MCF 10A (cell line): ENCODE measurements at regions of chr17 and their contacts with region 1.

Region 1: DNA sequence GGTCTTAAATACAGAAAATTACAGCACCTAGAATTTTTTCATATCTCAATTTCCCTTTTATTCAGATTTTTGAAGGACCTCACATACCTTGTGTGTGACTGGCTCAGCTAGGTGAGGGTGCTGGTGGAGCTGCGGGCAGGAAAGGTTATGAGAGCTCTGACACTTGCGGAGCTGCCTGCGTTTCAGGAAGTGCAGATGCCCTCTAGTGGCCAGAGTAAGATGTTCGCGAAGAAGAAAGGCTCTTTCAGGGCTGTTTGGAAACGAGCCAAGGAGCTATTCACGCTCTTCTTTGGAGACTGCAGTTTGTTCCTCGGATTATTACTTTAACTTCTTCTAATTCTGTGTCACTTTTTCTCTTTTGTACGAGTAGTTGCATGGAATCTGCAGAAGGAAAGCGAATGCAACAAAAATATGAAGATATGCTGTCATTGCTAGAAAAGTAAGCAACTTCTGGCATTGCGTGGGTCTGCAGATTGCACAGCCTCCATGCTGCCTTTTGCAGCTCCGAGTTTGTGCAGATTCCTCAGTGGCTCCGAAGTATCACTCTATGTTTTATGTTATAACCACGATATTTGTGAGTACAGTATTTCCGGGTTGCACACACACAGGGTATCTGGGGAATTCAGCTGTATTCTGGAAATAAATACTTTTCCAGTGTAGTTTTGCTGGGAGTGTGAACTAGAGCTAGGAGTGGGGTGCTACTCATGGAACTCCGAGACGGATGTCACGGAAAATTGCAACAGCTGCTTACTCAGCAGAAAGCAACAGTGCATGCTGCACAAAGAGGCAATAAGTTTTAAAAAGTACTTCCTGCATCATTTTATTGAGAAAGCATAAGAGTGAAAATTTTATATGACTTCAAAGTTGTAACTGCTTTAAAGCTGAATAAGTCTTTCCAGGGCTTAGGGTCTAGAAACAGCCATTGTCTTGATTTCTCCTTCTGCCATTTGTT is 46.3 kb downstream of the DNAH9 start:
- DNase-seq: peak; percentile 63
- H3K4me3 Mint-ChIP-seq: no peak overlapping the region
- H3K27ac Mint-ChIP-seq: no peak overlapping the region
- H3K4me1 Mint-ChIP-seq: peaks cover 17% of the 10 kb centered on the region
- H3K27me3 Mint-ChIP-seq: no peaks in the 10 kb centered on the region
- CTCF ChIP-seq: peak; percentile 74

Region 2: GRCh38 chr17:11144358-11145233 is 499.9 kb before region 1 on chr17:
- CTCF ChIA-PET with region 1: interaction called, 4 read pairs
- POLR2A ChIA-PET with region 1: no interaction called
- intact Hi-C with region 1: loop called (anchors 1 kb)
- DNase-seq: peak; percentile 46
- H3K4me3 Mint-ChIP-seq: no peak overlapping the region
- H3K27ac Mint-ChIP-seq: no peak overlapping the region
- H3K4me1 Mint-ChIP-seq: peaks cover 14% of the 10 kb centered on the region
- H3K27me3 Mint-ChIP-seq: no peaks in the 10 kb centered on the region
- CTCF ChIP-seq: peak; percentile 74

Region 3: DNA sequence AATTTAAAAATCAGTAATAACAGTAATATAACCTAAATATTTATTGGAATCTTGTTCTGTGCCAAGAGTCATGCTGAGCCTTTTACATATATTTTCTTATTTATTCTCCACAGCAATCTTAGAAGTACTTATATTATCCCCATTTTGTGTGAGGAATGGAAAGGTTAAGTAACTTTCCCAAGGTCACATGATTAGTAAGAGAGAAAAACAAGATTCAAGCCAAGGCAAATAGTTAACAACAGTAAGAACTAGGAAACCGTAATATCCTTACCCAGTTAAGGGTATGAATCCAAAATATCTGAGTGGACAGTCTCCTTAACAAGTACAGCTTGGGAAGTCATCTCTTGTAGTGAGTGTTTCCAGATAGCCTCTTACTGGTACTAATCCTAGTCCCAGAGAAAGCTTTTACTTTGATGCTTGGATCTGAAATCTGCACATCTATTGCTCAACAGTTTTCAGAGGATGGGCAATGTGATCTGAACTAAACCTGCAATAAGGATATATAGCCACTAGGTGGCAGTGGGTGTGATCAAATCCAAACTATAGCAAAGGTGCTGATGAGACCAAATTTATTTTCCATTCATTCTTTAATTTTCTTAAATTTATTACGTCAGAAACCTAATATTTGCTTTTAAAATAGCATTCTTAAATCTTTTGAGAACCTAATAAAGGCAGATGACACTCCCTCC is 380.2 kb before region 1 on chr17:
- CTCF ChIA-PET with region 1: no interaction called
- POLR2A ChIA-PET with region 1: no interaction called
- intact Hi-C with region 1: loop called (anchors 10 kb)
- DNase-seq: peak; percentile 0
- H3K4me3 Mint-ChIP-seq: no peak overlapping the region
- H3K27ac Mint-ChIP-seq: no peak overlapping the region
- H3K4me1 Mint-ChIP-seq: no peaks in the 10 kb centered on the region
- H3K27me3 Mint-ChIP-seq: peaks cover under 1% of the 10 kb centered on the region
- CTCF ChIP-seq: peak; percentile 36

Region 4: DNA sequence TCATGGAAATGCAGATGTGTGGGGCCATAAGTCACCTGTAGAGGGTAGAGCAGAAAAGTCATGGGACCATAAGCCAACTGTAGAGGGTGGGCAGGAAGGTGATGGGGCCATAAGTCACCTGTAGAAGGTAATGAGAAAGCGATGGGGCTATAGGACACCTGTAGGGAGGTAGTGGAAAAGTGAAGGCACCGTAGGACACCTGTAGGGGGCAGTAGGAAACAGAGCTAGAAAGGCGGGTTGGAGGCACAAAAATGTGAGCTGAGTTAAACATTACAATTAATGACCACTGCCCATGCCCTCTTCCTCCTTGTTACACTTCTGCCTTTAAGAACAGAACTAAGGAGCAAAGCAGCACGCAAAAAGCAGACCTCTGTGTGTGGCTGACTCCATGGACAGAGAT is 253.4 kb before region 1 on chr17:
- CTCF ChIA-PET with region 1: no interaction called
- POLR2A ChIA-PET with region 1: no interaction called
- intact Hi-C with region 1: loop called (anchors 2 kb)
- DNase-seq: no peak
- H3K4me3 Mint-ChIP-seq: no peak overlapping the region
- H3K27ac Mint-ChIP-seq: no peak overlapping the region
- H3K4me1 Mint-ChIP-seq: peaks cover 11% of the 10 kb centered on the region
- H3K27me3 Mint-ChIP-seq: no peaks in the 10 kb centered on the region
- CTCF ChIP-seq: peak; percentile 33

Region 5: DNA sequence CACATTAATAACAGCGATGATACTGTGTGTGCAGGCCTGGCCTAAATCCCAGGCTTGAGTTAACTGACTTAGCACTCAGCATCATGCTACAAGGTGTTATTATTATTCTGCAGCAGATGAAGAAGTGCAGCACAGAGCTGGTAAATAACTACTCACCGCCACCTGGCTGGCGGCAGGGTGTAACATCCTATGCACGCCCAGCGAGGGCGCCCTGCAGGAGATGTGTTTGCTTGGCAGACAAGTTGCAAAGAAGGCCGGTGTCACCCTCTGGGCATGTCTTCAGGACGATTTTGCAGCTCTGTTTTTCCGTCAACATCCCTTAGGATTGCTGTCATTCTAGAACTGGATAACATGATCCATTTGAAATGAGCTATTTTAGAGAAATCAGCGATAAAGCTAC is 16.2 kb before region 1 on chr17:
- CTCF ChIA-PET with region 1: interaction called, 16 read pairs
- POLR2A ChIA-PET with region 1: no interaction called
- intact Hi-C with region 1: no loop called
- DNase-seq: no peak
- H3K4me3 Mint-ChIP-seq: no peak overlapping the region
- H3K27ac Mint-ChIP-seq: no peak overlapping the region
- H3K4me1 Mint-ChIP-seq: peaks cover 6% of the 10 kb centered on the region
- H3K27me3 Mint-ChIP-seq: peaks cover 57% of the 10 kb centered on the region
- CTCF ChIP-seq: peak; percentile 24